Activated B cell treated with CpG ODN at 0.5 μM for 24 hours (primary cell): ENCODE measurements at regions of chr17 and their contacts with region 1.

Region 1: DNA sequence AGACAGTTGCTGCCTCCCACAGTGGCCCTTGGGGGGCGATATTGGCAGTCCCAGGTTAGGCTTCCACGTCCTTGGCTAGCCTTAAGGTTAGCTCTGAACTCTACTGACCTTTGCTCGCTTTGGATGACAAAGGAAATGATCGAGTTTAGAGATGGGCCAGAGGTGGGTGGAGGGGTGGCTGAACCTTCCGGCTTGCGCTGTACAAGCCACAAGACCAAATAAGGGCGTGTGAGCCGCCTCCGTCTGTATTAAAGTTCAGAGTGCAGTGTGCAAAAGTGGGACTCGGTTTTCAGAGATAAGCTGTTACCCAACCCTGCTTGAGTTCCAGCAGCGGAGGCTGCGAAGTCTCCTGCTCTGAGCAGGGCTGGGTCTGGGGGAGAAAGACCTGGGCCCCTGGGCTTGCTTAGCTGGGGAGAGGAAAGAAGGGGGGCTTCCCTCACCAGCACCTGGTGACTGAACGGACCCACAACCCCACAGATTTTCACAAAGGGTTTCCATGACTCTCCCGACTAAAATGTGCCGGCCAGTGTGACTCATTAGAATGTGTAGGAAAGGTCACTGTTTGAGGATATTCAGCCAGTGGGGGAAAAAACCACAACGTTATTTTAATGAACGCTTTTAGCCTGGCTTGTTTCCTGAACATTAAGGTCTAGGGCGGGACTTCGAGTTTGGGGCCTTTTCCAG is 67.2 kb downstream of the CENPV start:
- DNase-seq: peak; percentile 41
- ATAC-seq: peak; percentile 74
- H3K4me3 Mint-ChIP-seq: peak overlapping the region; percentile 82
- H3K27ac Mint-ChIP-seq: peak overlapping the region; percentile 99
- H3K4me1 Mint-ChIP-seq: peaks cover 64% of the 10 kb centered on the region
- H3K27me3 Mint-ChIP-seq: no peaks in the 10 kb centered on the region
- CTCF ChIP-seq: no peak

Region 2: GRCh38 chr17:16215273-16215964 is 70.7 kb before region 1 on chr17 and contains the start of gene NCOR1:
- CTCF ChIA-PET with region 1: interaction called, 9 read pairs
- POLR2A ChIA-PET with region 1: interaction called, 74 read pairs
- intact Hi-C with region 1: loop called (anchors 1 kb)
- DNase-seq: peak; percentile 83
- ATAC-seq: peak; percentile 86
- H3K4me3 Mint-ChIP-seq: peak within 1 kb of the TSS; percentile 98
- H3K27ac Mint-ChIP-seq: peak within 1 kb of the TSS; percentile 86
- H3K4me1 Mint-ChIP-seq: peaks cover 50% of the 10 kb centered on the region
- H3K27me3 Mint-ChIP-seq: no peaks in the 10 kb centered on the region
- CTCF ChIP-seq: no peak
- total RNA-seq, gene NCOR1: 163 and 188 TPM in 2 replicates

Region 3: DNA sequence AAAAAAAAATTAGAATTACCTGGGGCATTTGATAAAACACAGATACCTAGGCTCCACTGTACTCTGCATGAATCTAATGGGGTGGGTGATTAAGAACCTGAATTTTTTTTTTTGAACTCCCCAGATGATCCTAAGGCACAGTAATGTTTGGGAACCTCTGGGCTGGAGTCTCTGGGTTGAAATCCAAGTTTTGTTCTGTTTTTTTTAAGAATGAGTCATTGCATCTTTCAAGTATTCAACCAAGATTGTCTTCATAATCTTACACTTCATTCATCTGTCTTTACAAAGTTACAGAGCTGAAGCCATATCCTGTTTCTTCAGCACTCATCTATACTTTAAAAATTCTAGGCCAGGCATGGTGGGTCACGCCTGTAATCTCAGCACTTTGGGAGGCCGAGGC is 16.4 kb before region 1 on chr17:
- CTCF ChIA-PET with region 1: interaction called, 5 read pairs
- POLR2A ChIA-PET with region 1: interaction called, 47 read pairs
- intact Hi-C with region 1: loop called (anchors 1 kb)
- DNase-seq: no peak
- ATAC-seq: no peak
- H3K4me3 Mint-ChIP-seq: no peak overlapping the region
- H3K27ac Mint-ChIP-seq: no peak overlapping the region
- H3K4me1 Mint-ChIP-seq: peaks cover 33% of the 10 kb centered on the region
- H3K27me3 Mint-ChIP-seq: no peaks in the 10 kb centered on the region
- CTCF ChIP-seq: no peak

Region 4: GRCh38 chr17:16304830-16305229 is 18.7 kb after region 1 on chr17:
- CTCF ChIA-PET with region 1: interaction called, 10 read pairs
- POLR2A ChIA-PET with region 1: interaction called, 9 read pairs
- intact Hi-C with region 1: no loop called
- DNase-seq: no peak
- ATAC-seq: peak; percentile 64
- H3K4me3 Mint-ChIP-seq: no peak overlapping the region
- H3K27ac Mint-ChIP-seq: no peak overlapping the region
- H3K4me1 Mint-ChIP-seq: peaks cover 4% of the 10 kb centered on the region
- H3K27me3 Mint-ChIP-seq: no peaks in the 10 kb centered on the region
- CTCF ChIP-seq: no peak

Region 5: GRCh38 chr17:16353317-16354174 is 67.4 kb after region 1 on chr17 and contains the start of gene CENPV:
- CTCF ChIA-PET with region 1: interaction called, 15 read pairs
- POLR2A ChIA-PET with region 1: interaction called, 21 read pairs
- intact Hi-C with region 1: loop called (anchors 1 kb)
- DNase-seq: peak; percentile 73
- ATAC-seq: peak; percentile 82
- H3K4me3 Mint-ChIP-seq: peak within 1 kb of the TSS; percentile 90
- H3K27ac Mint-ChIP-seq: peak within 1 kb of the TSS; percentile 71
- H3K4me1 Mint-ChIP-seq: peaks cover 18% of the 10 kb centered on the region
- H3K27me3 Mint-ChIP-seq: no peaks in the 10 kb centered on the region
- CTCF ChIP-seq: no peak
- total RNA-seq, gene CENPV: 24.0 and 25.7 TPM in 2 replicates

Region 6: DNA sequence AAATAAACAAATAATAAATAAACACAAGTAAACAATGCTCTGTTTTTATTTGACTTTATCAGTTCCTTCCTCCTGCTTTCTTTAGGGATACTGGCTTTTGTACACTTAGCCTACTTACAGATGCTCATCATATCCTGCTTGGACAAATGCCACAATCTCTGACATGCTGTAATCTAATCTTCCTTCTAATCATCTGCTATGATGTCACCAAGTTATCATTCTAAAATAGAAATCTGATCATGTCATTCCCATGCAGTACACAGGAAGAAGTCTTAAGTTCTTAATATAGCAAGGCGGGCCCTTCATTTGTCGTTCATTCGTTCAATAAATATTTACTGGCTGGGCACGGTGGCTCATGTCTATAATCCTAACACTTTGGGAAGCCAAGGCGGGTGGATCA is 85.6 kb after region 1 on chr17:
- CTCF ChIA-PET with region 1: no interaction called
- POLR2A ChIA-PET with region 1: no interaction called
- intact Hi-C with region 1: no loop called
- DNase-seq: no peak
- ATAC-seq: no peak
- H3K4me3 Mint-ChIP-seq: no peak overlapping the region
- H3K27ac Mint-ChIP-seq: no peak overlapping the region
- H3K4me1 Mint-ChIP-seq: no peaks in the 10 kb centered on the region
- H3K27me3 Mint-ChIP-seq: no peaks in the 10 kb centered on the region
- CTCF ChIP-seq: no peak

Region 7: GRCh38 chr17:16415031-16415924 is 129.2 kb after region 1 on chr17 and contains the start of gene TRPV2:
- CTCF ChIA-PET with region 1: interaction called, 3 read pairs
- POLR2A ChIA-PET with region 1: interaction called, 11 read pairs
- intact Hi-C with region 1: loop called (anchors 2 kb)
- DNase-seq: peak; percentile 51
- ATAC-seq: peak; percentile 41
- H3K4me3 Mint-ChIP-seq: peak within 1 kb of the TSS; percentile 95
- H3K27ac Mint-ChIP-seq: peak within 1 kb of the TSS; percentile 97
- H3K4me1 Mint-ChIP-seq: peaks cover 41% of the 10 kb centered on the region
- H3K27me3 Mint-ChIP-seq: no peaks in the 10 kb centered on the region
- CTCF ChIP-seq: no peak
- total RNA-seq, gene TRPV2: 58.3 and 65.8 TPM in 2 replicates